Activated B cell treated with CpG ODN at 0.5 μM for 24 hours (primary cell): ENCODE measurements at regions of chr6 and their contacts with region 1.

Region 1: DNA sequence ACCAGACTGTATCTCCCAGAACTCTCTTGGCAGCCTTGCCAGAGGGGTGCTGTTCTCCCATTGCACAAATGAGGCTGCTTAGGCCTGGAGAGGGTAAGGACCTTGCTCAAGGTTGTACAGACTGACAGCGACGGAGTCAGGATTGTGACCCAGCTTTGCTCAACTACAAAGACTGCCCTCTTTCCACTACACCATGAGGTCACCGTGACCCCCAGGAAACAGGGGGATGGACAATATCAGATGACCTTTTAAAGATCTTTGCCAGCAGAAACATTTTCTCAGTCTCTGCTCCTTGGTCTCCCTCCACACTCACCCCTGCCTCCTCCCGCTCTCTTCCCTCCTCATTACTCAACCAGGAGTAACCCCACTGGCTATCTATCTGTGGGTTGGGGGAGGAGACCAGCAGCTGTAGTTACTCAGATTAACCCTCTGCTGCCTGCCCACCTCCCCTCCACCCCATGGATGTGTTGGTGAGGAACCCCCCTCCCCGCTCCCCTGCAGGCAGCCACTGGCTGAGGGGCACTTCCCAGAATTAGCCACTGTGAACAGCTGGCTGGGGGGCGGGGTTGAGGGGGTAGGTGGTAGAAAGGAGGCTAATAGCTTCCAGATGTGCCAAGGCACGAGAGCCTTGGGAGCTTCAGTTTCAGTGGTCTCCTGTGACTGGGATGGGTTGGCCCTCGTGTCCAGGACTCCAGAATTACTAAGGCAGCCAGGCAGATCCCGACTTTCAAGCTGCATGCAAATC is 26.9 kb upstream of the MRPS18A start:
- DNase-seq: peak; percentile 65
- ATAC-seq: peak; percentile 15
- H3K4me3 Mint-ChIP-seq: peak overlapping the region; percentile 81
- H3K27ac Mint-ChIP-seq: peak overlapping the region; percentile 91
- H3K4me1 Mint-ChIP-seq: peaks cover 60% of the 10 kb centered on the region
- H3K27me3 Mint-ChIP-seq: no peaks in the 10 kb centered on the region
- CTCF ChIP-seq: no peak

Region 2: GRCh38 chr6:43060034-43060754 is 654.3 kb before region 1 on chr6:
- CTCF ChIA-PET with region 1: no interaction called
- POLR2A ChIA-PET with region 1: no interaction called
- intact Hi-C with region 1: no loop called
- DNase-seq: no peak
- ATAC-seq: no peak
- H3K4me3 Mint-ChIP-seq: peak overlapping the region; percentile 95
- H3K27ac Mint-ChIP-seq: peak overlapping the region; percentile 97
- H3K4me1 Mint-ChIP-seq: peaks cover 37% of the 10 kb centered on the region
- H3K27me3 Mint-ChIP-seq: no peaks in the 10 kb centered on the region
- CTCF ChIP-seq: no peak

Region 3: DNA sequence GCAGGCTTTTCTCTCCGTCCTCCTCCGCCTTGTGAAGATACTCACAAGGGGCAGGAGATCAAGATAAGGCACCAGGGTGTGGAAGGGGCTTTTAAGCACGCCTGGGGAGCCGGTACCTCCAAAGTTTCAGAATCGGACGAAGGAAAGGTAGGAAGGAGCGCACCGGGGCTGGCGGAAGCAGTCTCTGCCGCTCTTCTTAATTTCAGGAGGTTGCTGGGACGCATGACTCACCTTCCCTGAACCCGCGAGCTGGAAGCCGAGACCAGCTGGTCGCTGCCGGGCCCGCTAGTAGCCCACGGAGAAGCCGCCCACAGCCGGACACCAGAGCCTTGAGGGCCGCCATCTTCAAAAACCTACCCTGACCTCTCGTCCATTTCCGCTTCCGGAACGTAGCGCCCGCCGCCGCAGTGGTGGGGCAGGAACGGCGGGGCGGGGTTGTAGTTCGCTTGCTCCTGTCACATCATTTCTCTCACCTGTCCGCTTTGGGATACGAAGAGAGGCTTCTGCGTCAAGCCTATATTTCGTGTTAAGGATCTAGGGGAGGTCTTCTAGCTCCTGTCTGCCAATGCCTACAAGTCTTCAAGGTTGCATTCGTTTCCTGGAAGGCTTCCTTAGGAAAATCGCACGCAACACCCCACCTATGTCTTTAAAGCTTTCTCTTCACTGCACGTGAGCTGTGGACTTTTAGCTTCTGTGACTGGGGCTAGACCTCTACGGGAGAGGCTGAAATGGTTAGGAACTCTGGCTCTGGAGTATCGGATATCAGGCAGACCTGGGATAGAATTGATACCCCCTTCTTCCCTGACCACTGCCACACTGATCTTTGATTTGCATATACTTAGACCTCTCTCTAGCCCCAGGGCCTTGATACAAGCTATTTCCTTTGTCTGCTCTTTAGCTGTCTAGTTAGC is 26.8 kb before region 1 on chr6 and contains the start of gene MRPS18A:
- CTCF ChIA-PET with region 1: no interaction called
- POLR2A ChIA-PET with region 1: interaction called, 27 read pairs
- intact Hi-C with region 1: loop called (anchors 1 kb)
- DNase-seq: peak; percentile 70
- ATAC-seq: peak; percentile 89
- H3K4me3 Mint-ChIP-seq: peak within 1 kb of the TSS; percentile 95
- H3K27ac Mint-ChIP-seq: peak within 1 kb of the TSS; percentile 85
- H3K4me1 Mint-ChIP-seq: peaks cover 52% of the 10 kb centered on the region
- H3K27me3 Mint-ChIP-seq: no peaks in the 10 kb centered on the region
- CTCF ChIP-seq: no peak
- total RNA-seq, gene MRPS18A: 57.0 and 59.1 TPM in 2 replicates

Region 4: GRCh38 chr6:43702534-43703440 is 11.7 kb before region 1 on chr6:
- CTCF ChIA-PET with region 1: interaction called, 10 read pairs
- POLR2A ChIA-PET with region 1: interaction called, 122 read pairs
- intact Hi-C with region 1: loop called (anchors 1 kb)
- DNase-seq: peak; percentile 50
- ATAC-seq: peak; percentile 80
- H3K4me3 Mint-ChIP-seq: no peak overlapping the region
- H3K27ac Mint-ChIP-seq: peak overlapping the region; percentile 26
- H3K4me1 Mint-ChIP-seq: peaks cover 51% of the 10 kb centered on the region
- H3K27me3 Mint-ChIP-seq: peaks cover 4% of the 10 kb centered on the region
- CTCF ChIP-seq: no peak

Region 5: DNA sequence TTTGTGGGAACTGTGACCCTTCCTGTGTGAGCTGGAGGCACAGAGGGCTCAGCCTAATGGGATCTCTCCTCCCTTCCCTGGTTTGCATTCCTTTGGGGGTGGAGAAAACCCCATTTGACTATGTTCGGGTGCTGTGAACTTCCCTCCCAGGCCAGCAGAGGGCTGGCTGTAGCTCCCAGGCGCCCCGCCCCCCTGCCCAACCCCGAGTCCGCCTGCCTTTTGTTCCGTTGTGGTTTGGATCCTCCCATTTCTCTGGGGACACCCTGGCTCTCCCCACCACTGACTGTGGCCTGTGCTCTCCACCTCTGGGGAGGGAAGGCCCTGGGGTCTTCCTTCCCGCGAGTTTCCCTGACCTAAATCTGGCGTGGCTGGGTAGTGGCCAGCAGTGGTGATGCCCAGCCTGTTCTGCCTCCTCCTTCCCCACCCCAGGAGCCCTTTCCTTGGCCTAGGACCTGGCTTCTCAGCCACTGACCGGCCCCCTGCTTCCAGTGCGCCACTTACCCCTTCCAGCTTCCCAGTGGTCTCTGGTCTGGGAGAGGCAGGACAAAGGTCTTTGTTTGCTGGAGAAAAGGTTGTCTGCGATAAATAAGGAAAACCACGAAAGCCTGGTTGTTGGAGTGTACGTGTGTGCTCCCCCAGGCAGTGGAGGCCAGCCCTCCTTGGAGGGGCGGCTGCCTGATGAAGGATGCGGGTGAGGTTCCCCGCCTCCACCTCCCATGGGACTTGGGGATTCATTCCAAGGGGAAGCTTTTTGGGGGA is 60.5 kb after region 1 on chr6:
- CTCF ChIA-PET with region 1: interaction called, 11 read pairs
- POLR2A ChIA-PET with region 1: interaction called, 41 read pairs
- intact Hi-C with region 1: no loop called
- DNase-seq: peak; percentile 40
- ATAC-seq: no peak
- H3K4me3 Mint-ChIP-seq: peak overlapping the region; percentile 7
- H3K27ac Mint-ChIP-seq: no peak overlapping the region
- H3K4me1 Mint-ChIP-seq: peaks cover 40% of the 10 kb centered on the region
- H3K27me3 Mint-ChIP-seq: peaks cover 14% of the 10 kb centered on the region
- CTCF ChIP-seq: peak; percentile 54

Region 6: DNA sequence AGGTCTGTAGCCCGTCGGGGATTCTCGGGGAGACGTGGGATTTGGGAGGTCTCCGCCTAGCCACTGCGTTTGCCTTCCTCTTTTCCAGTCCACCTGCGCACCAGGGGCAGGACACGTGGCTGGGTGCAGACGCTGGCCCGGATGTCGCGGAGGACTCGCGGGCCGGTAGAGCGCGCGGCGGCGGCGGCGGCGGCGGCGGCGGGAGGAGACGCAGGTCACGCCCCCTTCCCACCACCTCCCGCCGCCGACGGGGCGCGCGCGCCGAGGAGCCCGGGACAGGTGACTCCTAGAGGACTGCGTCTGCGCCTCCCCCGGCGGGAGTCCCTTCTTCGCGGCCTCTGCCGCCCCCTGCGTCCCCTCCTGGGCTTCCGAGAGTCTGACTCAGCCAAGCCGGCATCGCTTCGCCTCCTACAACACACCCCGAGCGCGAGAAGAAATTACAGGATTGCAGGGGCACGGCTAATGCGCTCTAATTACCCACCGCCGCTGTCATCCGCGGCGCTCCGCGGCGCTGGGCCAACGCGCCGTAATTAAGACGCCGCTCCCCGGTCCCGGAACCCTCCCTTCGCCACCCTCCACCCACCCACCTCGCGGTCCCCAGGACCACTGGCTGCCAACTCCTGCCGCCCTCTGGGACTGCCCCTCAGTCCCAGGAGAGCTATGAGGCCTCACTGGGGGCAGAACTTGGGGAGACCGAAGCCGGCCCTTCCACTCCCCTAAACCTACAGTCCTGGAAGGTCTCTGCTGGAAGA is 288.3 kb after region 1 on chr6:
- CTCF ChIA-PET with region 1: no interaction called
- POLR2A ChIA-PET with region 1: interaction called, 11 read pairs
- intact Hi-C with region 1: no loop called
- DNase-seq: peak; percentile 49
- ATAC-seq: peak; percentile 61
- H3K4me3 Mint-ChIP-seq: peak overlapping the region; percentile 76
- H3K27ac Mint-ChIP-seq: no peak overlapping the region
- H3K4me1 Mint-ChIP-seq: peaks cover 20% of the 10 kb centered on the region
- H3K27me3 Mint-ChIP-seq: peaks cover 49% of the 10 kb centered on the region
- CTCF ChIP-seq: no peak

Region 7: DNA sequence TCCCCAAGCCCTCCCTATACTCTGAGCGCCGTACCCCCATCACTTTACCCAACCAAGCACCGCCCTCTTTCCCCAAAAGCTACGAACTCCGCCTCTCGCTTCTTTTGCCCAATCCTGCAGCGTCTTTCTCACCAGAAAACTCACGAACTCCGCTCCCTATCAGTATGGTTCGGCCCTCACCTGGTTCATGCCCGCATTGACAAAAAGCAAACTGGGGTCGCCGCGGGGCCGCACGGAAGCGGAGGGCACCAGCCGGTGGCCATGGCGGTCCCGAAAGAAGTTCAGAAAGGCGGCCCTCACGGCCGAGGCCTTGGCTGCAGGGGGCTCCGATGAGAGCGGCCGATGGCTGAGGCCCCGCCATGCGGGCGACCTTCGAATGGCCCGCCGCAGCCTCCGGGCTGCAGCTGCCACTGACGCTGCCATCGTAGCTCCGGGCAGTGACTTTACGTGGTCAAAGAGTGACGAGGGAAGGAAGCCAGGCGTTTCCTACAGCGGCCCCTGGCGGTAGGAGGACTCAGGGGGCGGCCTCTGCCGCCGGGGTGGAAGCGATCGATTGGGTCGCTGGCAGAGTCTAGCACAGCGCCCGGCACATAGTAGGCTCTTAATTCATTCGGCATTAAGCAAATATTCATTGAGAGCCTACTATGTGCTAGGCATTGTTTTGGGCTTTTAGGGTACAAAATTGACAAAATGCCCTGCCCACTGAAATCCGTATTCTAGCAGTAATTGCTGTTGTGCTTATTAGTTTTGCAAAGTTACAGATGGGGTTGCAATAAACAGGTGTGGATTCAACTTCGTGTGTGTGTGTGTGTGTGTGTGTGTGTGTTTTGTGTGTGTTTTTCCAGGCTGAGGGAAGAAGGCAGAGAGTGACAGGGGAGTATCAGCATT is 598.7 kb after region 1 on chr6 and contains the start of gene AARS2:
- CTCF ChIA-PET with region 1: no interaction called
- POLR2A ChIA-PET with region 1: no interaction called
- intact Hi-C with region 1: loop called (anchors 1 kb)
- DNase-seq: peak; percentile 94
- ATAC-seq: peak; percentile 96
- H3K4me3 Mint-ChIP-seq: peak within 1 kb of the TSS; percentile 96
- H3K27ac Mint-ChIP-seq: peak within 1 kb of the TSS; percentile 91
- H3K4me1 Mint-ChIP-seq: peaks cover 14% of the 10 kb centered on the region
- H3K27me3 Mint-ChIP-seq: peaks cover 6% of the 10 kb centered on the region
- CTCF ChIP-seq: peak; percentile 85
- total RNA-seq, gene AARS2: 19.1 and 22.4 TPM in 2 replicates